ENCODE measurements at regions of chr16 and their contacts with region 1.

Region 1: DNA sequence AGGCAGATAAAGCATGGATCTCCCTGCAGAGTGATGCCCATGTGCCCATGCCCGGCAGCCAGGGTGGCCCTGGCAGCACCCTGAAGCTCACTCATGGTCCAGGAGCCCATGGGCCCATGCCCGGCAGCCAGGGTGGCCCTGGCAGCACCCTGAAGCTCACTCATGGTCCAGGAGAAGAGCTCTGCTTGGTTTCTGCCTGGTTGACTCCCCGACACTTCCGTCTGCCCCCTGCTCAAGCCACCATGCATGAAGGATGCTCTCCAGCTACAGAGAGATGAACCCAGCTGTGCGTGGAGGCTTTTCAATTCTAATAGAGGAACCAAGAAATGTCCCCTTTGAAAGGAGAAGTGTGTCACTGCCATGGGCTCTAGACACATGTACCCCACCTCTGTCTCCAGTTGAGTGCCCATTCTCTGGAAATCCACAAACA is 8.7 kb downstream of the CCL17 start:
- DNase-seq: no peak
- H3K4me3 Mint-ChIP-seq: no peak overlapping the region
- H3K27ac Mint-ChIP-seq: no peak overlapping the region
- H3K4me1 Mint-ChIP-seq: peaks cover 9% of the 10 kb centered on the region
- H3K27me3 Mint-ChIP-seq: no peaks in the 10 kb centered on the region

Region 2: GRCh38 chr16:56203052-56203451 is 1210.3 kb before region 1 on chr16:
- CTCF ChIA-PET with region 1: no interaction called
- intact Hi-C with region 1: no loop called
- DNase-seq: peak; percentile 75
- H3K4me3 Mint-ChIP-seq: no peak overlapping the region
- H3K27ac Mint-ChIP-seq: no peak overlapping the region
- H3K4me1 Mint-ChIP-seq: peaks cover 21% of the 10 kb centered on the region
- H3K27me3 Mint-ChIP-seq: peaks cover 5% of the 10 kb centered on the region

Region 3: GRCh38 chr16:57196286-57196685 is 217.0 kb before region 1 on chr16:
- CTCF ChIA-PET with region 1: no interaction called
- intact Hi-C with region 1: no loop called
- DNase-seq: no peak
- H3K4me3 Mint-ChIP-seq: no peak overlapping the region
- H3K27ac Mint-ChIP-seq: no peak overlapping the region
- H3K4me1 Mint-ChIP-seq: peaks cover 31% of the 10 kb centered on the region
- H3K27me3 Mint-ChIP-seq: no peaks in the 10 kb centered on the region

Region 4: DNA sequence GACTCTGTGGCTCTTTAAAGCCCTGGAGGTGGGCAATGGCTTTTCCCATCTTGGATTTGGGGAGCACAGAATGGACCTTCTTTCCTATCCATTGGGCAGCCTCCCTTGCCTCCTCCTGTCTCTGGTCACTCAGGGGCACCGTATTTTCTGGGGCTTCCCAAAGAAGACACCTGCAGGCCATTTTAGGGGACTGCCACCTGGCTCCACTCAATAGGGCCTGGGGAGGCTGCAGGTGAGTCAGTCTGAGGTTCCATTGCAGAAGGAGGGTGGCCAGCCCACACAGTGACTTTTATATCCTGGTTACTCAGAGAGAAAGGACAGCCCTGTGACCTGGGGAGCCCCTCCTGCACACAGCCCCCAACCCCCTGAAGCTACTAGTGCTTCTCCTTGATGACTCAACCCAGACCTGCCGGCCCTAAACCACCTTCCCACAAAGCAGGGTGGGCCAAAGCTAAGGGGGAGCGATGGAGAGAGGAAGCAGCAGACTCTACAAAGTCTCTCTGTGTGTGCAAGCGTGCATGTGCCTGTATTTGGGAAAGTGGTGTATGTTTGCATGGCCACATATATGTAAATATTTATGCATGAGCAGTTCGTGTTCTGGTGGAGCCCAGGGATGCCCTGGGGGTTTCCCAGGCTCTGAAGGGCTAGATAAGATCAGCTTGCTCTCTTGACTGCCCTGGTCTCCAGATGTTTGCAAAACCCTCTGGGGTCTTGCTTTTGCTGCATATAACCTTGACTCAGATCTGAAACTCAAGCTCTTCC is 36.1 kb before region 1 on chr16:
- CTCF ChIA-PET with region 1: interaction called, 13 read pairs
- intact Hi-C with region 1: no loop called
- DNase-seq: peak; percentile 40
- H3K4me3 Mint-ChIP-seq: no peak overlapping the region
- H3K27ac Mint-ChIP-seq: no peak overlapping the region
- H3K4me1 Mint-ChIP-seq: peaks cover 10% of the 10 kb centered on the region
- H3K27me3 Mint-ChIP-seq: no peaks in the 10 kb centered on the region

Region 5: DNA sequence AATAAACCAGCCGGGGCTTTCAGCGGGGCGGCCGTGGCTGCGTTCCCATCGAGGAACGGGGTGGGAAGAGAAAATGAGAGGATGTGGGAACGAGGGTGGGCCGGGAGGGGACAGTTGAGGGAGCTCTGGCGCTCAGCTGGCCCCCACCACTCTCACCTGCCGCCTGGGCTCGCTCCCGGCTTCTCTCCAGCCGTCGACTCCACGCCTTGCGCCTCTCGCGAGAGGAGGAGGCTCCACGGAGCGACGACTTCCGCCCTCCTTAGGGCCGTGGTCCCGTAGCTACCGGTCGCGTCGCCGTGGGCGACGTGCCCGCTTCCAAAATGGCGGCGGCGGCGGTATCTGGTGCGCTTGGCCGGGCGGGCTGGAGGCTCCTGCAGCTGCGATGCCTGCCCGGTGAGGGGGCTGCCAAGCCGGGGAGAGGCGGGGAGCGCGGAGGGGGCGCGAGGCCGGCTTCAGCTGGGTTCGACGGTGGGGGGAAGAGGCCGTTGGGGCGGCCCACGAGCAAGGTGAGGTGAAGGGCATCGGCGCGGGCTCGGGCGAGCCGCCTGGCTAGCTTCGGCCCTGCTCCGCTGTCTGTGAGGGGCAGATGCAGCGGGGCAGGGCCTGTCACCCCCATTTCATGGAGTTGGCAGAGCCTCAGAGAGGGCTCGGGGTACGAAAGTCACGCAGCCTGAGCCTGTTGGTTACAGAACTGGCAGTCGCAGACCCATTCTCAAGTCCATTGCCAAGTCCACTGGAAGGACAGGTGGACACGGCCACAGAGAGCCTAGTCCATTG is 34.1 kb after region 1 on chr16 and contains the starts of genes CIAPIN1 and COQ9:
- CTCF ChIA-PET with region 1: interaction called, 11 read pairs
- intact Hi-C with region 1: loop called (anchors 1 kb)
- DNase-seq: peak; percentile 96
- H3K4me3 Mint-ChIP-seq: peak within 1 kb of the TSS; percentile 86
- H3K27ac Mint-ChIP-seq: peak within 1 kb of the TSS; percentile 86
- H3K4me1 Mint-ChIP-seq: peaks cover 42% of the 10 kb centered on the region
- H3K27me3 Mint-ChIP-seq: no peaks in the 10 kb centered on the region
- total RNA-seq, gene CIAPIN1: 29.5 to 31.0 TPM
- total RNA-seq, gene COQ9: 30.6 TPM

Region 6: GRCh38 chr16:57519796-57520360 is 106.6 kb after region 1 on chr16:
- CTCF ChIA-PET with region 1: interaction called, 79 read pairs
- intact Hi-C with region 1: no loop called
- DNase-seq: peak; percentile 87
- H3K4me3 Mint-ChIP-seq: no peak overlapping the region
- H3K27ac Mint-ChIP-seq: peak overlapping the region; percentile 73
- H3K4me1 Mint-ChIP-seq: peaks cover 4% of the 10 kb centered on the region
- H3K27me3 Mint-ChIP-seq: no peaks in the 10 kb centered on the region